IMR-90 (cell line): ENCODE measurements at regions of chr2 and their contacts with region 1.

Region 1: GRCh38 chr2:134918526-134919340 is at the start of gene CCNT2:
- DNase-seq: peak; percentile 98
- ATAC-seq: peak; percentile 91
- H3K4me3 ChIP-seq: peak within 1 kb of the TSS; percentile 89
- H3K27ac ChIP-seq: peak within 1 kb of the TSS; percentile 98
- H3K4me1 ChIP-seq: peaks cover 2% of the 10 kb centered on the region; the same call in 1 of the 2 replicates
- H3K27me3 ChIP-seq: no peaks in the 10 kb centered on the region
- CTCF ChIP-seq: 0 out of 2 replicates have a peak, but pooled peaks have one; percentile 3
- POLR2A ChIP-seq: peak; percentile 87
- RAD21 ChIP-seq: no peak
- total RNA-seq, gene CCNT2: 30.6 and 44.6 TPM in 2 replicates

Region 2: GRCh38 chr2:134819334-134819733 is 99.4 kb before region 1 on chr2:
- CTCF ChIA-PET with region 1: no interaction called
- POLR2A ChIA-PET with region 1: no interaction called
- dilution Hi-C with region 1: no loop called
- in situ Hi-C with region 1: no loop called
- intact Hi-C with region 1: no loop called
- DNase-seq: peak; percentile 74
- ATAC-seq: no peak
- H3K4me3 ChIP-seq: no peak overlapping the region
- H3K27ac ChIP-seq: no peak overlapping the region
- H3K4me1 ChIP-seq: no peaks in the 10 kb centered on the region
- H3K27me3 ChIP-seq: no peaks in the 10 kb centered on the region
- CTCF ChIP-seq: no peak
- POLR2A ChIP-seq: no peak
- RAD21 ChIP-seq: no peak

Region 3: GRCh38 chr2:135825131-135825530 is 906.4 kb after region 1 on chr2:
- CTCF ChIA-PET with region 1: no interaction called
- POLR2A ChIA-PET with region 1: interaction called, 12 read pairs
- dilution Hi-C with region 1: no loop called
- in situ Hi-C with region 1: no loop called
- intact Hi-C with region 1: no loop called
- DNase-seq: no peak
- ATAC-seq: no peak
- H3K4me3 ChIP-seq: no peak overlapping the region
- H3K27ac ChIP-seq: no peak overlapping the region
- H3K4me1 ChIP-seq: peaks cover 3% of the 10 kb centered on the region; the same call in 1 of the 2 replicates
- H3K27me3 ChIP-seq: peaks cover 4% of the 10 kb centered on the region; the same call in 1 of the 2 replicates
- CTCF ChIP-seq: no peak
- POLR2A ChIP-seq: no peak
- RAD21 ChIP-seq: no peak